Left lung (tissue), 14 donors: ENCODE measurements at regions of chr2 and their contacts with region 1.

Region 1: DNA sequence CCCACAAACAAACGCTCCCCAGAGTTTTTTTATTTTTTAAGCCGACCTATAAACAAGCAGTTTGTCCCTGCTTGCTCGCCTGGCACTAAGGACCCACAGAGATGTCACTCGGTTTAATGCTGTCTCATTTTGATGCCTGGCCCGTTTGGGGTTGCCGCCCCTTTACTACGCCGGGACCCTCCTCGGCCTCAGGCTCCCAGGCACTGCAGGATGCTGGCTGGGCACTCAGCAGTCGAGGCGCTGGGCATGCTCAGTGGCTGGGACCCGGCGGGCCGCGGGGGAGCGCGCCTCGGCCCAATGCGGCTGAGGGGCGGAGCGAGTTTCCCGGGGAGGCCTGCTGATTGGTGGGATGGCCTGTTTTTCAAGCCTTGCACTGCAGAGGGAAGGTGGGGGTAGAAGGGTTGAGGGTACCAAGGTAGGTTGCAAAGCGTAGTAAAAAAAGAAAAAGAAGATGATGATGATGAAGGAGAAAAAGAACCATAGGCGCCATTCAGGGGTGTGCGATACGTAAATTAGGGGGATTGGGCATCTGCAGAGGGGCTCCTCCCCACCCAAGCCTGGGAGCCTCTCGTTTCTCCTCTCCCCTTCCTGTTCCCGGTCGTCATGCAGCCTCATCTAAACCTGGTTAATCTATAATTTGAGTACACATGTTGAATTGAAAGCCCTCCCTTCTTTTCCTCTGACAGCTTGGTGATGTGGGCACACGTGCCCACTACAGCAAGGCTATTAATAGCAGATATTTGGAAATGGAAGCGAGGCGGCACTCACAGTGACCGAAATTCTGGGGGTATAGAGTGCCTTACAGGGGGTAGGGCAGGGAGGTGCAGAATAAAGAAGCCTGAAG is 1.5 kb upstream of the IRS1 start:
- DNase-seq: peak in 3 of 4 donors; percentile 84 to 92 (median 89)
- ATAC-seq: peak; percentile 82
- H3K4me3 ChIP-seq: peak overlapping the region; percentile 57 to 68
- H3K27ac ChIP-seq: peak overlapping the region in 1 of 2 donors; percentile 91
- H3K4me1 ChIP-seq: peaks cover 6 to 49% of the 10 kb centered on the region in 2 donors
- H3K27me3 ChIP-seq: peaks cover 0 to 85% of the 10 kb centered on the region in 2 donors
- CTCF ChIP-seq: no peak

Region 2: GRCh38 chr2:225889446-225889850 is 911.7 kb before region 1 on chr2:
- intact Hi-C with region 1: loop called in 1 of 2 experiments (anchors 10 kb)
- DNase-seq: peak in 2 of 4 donors; percentile 49 to 65
- ATAC-seq: peak; percentile 80
- H3K4me3 ChIP-seq: no peak overlapping the region
- H3K27ac ChIP-seq: no peak overlapping the region
- H3K4me1 ChIP-seq: no peaks in the 10 kb centered on the region
- H3K27me3 ChIP-seq: no peaks in the 10 kb centered on the region
- CTCF ChIP-seq: peak; percentile 47 to 79